ENCODE measurements at regions of chr15 and their contacts with region 1.

Region 1: DNA sequence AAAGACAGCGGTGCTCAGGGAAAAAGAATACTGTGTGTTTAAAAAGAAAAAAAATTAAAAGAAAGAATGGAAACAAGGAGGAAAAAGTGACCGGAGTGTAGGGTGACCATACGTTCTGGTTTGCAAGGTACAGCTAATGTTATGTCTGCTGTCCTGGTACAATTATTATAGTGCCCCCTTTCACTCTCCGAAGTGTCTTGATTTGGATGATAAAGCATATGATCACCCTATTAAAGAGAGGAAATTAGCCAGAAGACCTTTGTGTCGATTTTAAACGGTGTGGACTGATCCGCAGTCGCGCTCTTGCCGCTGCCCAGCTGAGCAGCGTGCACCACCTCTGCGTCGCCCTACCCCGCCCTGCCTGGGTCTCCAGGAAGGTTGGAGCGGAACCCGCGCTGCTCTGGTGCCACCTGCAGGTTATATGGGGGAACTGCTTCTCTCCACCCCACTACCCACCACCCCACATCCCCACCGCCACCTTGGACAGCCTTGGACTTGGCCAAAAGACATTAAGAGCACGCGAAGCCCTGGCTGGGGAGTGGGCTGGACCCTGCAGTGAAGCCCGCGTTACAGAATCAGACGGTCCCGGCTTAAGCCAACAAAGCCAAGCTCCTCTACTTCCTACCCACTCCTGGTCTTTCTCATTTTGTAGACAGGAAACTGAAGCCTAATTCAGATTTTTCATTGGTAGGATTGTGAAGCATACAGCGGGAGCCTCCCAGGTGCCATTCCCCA is 41.2 kb upstream of the UBE2Q2 start:
- DNase-seq: peak; percentile 75 to 95 (median 84)
- ATAC-seq: peak; percentile 100
- H3K4me3 ChIP-seq: no peak overlapping the region
- H3K27ac ChIP-seq: no peak overlapping the region
- H3K4me1 ChIP-seq: peaks cover 0 to 6% of the 10 kb centered on the region in 2 donors
- H3K27me3 ChIP-seq: peaks cover 16 to 50% of the 10 kb centered on the region in 2 donors
- CTCF ChIP-seq: peak; percentile 89 to 92

Region 2: DNA sequence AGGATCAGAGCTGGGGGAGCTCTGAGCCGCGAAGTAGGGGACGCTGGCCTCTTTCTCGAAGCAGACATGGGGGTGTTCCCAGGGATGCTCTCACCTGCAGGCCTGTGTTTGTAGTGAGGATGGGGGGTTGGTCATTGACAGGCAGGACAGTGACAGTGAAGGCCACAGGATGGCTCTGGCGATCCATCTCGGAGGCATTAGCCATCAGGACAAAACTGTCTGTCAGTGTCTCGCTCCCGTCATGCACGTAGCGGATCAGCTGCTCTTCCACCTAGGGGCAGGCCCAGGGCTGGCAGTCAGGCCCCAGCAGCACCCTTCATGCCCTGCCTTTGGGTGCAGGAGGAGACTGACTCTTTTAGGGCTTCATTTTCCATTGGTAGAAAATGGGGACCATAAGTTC is 117.4 kb before region 1 on chr15:
- intact Hi-C with region 1: loop called in 1 of 2 experiments (anchors 10 kb)
- DNase-seq: no peak
- ATAC-seq: no peak
- H3K4me3 ChIP-seq: no peak overlapping the region
- H3K27ac ChIP-seq: no peak overlapping the region
- H3K4me1 ChIP-seq: peaks cover 0 to 7% of the 10 kb centered on the region in 2 donors
- H3K27me3 ChIP-seq: no peaks in the 10 kb centered on the region
- CTCF ChIP-seq: no peak

Region 3: GRCh38 chr15:75738647-75739331 is 63.2 kb before region 1 on chr15:
- intact Hi-C with region 1: loop called in 1 of 2 experiments (anchors 10 kb)
- DNase-seq: peak; percentile 88 to 99 (median 96)
- ATAC-seq: peak; percentile 99
- H3K4me3 ChIP-seq: peak overlapping the region; percentile 78 to 80
- H3K27ac ChIP-seq: no peak overlapping the region
- H3K4me1 ChIP-seq: peaks cover 0 to 19% of the 10 kb centered on the region in 2 donors
- H3K27me3 ChIP-seq: peaks cover 0 to 4% of the 10 kb centered on the region in 2 donors
- CTCF ChIP-seq: no peak